WTC11 (cell line): ENCODE measurements at regions of chr10 and their contacts with region 1.

Region 1: GRCh38 chr10:48656241-48656913 is 28.3 kb upstream of the WDFY4 start:
- DNase-seq: peak; percentile 86
- ATAC-seq: peak; percentile 77
- H3K4me3 Mint-ChIP-seq: peak overlapping the region; percentile 66
- H3K27ac Mint-ChIP-seq: no peak overlapping the region
- H3K4me1 Mint-ChIP-seq: peaks cover 16% of the 10 kb centered on the region
- H3K27me3 Mint-ChIP-seq: peaks cover 30% of the 10 kb centered on the region
- CTCF ChIP-seq: peak; percentile 90

Region 2: DNA sequence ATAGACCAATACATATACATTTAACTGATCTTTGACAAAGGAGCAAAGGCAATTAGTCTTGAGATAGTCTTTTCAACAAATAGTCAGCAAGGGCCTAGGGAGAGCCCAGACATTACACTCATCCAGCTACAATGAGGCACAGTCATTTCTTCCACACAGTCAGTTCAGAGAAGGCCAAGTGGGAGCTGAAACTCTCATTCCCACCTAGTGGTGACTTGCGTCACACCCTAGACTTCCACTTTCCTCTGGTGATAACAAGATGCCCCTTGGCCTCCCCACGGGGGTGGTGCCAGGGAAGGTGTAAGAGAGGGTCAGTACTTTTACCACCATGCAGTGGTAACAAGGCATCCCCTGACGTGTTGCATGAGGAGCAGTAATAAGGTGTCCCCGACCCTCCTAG is 389.8 kb before region 1 on chr10:
- CTCF ChIA-PET with region 1: no interaction called
- POLR2A ChIA-PET with region 1: no interaction called
- DNase-seq: no peak
- ATAC-seq: no peak; the same call in 1 of the 2 replicates
- H3K4me3 Mint-ChIP-seq: no peak overlapping the region
- H3K27ac Mint-ChIP-seq: no peak overlapping the region
- H3K4me1 Mint-ChIP-seq: peaks cover 10% of the 10 kb centered on the region
- H3K27me3 Mint-ChIP-seq: peaks cover 2% of the 10 kb centered on the region; the same call in 1 of the 2 replicates
- CTCF ChIP-seq: no peak

Region 3: GRCh38 chr10:48384699-48384982 is 271.7 kb before region 1 on chr10:
- CTCF ChIA-PET with region 1: interaction called, 12 read pairs
- POLR2A ChIA-PET with region 1: no interaction called
- DNase-seq: no peak
- ATAC-seq: no peak
- H3K4me3 Mint-ChIP-seq: no peak overlapping the region
- H3K27ac Mint-ChIP-seq: peak overlapping the region; percentile 53; the same call in 1 of the 2 replicates
- H3K4me1 Mint-ChIP-seq: peaks cover 19% of the 10 kb centered on the region
- H3K27me3 Mint-ChIP-seq: no peaks in the 10 kb centered on the region; the same call in 1 of the 2 replicates
- CTCF ChIP-seq: no peak

Region 4: DNA sequence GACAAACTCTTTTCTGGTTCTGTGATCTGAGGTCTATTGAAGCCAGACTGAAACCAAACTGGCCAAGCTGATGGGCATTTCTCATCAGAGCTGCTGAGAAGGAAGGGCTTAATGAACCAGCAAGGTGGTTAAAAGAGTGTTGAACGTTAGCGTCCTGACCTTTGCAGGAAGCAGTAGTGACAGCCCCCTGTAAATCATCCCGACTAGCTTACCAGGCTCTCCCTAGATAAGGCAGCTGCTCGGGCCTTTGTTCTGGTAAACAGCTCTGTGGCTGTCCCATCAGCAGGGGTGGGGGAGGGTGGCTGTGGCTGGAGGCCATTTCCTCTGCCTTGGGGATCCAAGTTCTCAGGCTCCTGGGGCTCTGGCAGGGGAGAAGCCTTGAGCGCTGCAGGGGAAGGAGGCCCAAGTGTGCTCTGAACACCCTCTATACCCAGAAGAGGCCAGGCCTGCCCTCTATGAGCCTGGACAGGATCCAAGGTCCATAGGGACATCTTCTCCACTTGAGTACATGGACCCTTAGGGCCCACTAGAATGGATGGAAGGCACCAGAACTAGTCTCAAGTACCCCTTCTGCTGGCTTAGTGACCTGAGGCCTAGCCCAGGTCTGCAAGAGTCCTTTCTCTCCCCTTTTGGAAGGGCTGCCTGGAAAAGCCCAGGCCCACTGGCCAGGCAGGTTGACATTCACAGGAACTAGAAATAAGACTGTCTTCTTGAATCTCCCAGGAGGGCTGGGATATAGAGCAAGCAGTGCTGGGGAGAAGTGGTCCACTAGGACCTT is 186.1 kb before region 1 on chr10:
- CTCF ChIA-PET with region 1: interaction called, 11 read pairs
- POLR2A ChIA-PET with region 1: no interaction called
- DNase-seq: no peak
- ATAC-seq: peak; percentile 69
- H3K4me3 Mint-ChIP-seq: no peak overlapping the region
- H3K27ac Mint-ChIP-seq: peak overlapping the region; percentile 23; the same call in 1 of the 2 replicates
- H3K4me1 Mint-ChIP-seq: peaks cover 40% of the 10 kb centered on the region
- H3K27me3 Mint-ChIP-seq: peaks cover 15% of the 10 kb centered on the region
- CTCF ChIP-seq: no peak

Region 5: GRCh38 chr10:48487244-48487643 is 169.1 kb before region 1 on chr10:
- CTCF ChIA-PET with region 1: no interaction called
- POLR2A ChIA-PET with region 1: no interaction called
- DNase-seq: no peak
- ATAC-seq: no peak
- H3K4me3 Mint-ChIP-seq: no peak overlapping the region
- H3K27ac Mint-ChIP-seq: no peak overlapping the region
- H3K4me1 Mint-ChIP-seq: peaks cover 27% of the 10 kb centered on the region
- H3K27me3 Mint-ChIP-seq: no peaks in the 10 kb centered on the region
- CTCF ChIP-seq: no peak

Region 6: GRCh38 chr10:48541144-48541795 is 115.1 kb before region 1 on chr10:
- CTCF ChIA-PET with region 1: interaction called, 268 read pairs
- POLR2A ChIA-PET with region 1: no interaction called
- DNase-seq: no peak
- ATAC-seq: no peak
- H3K4me3 Mint-ChIP-seq: no peak overlapping the region
- H3K27ac Mint-ChIP-seq: no peak overlapping the region
- H3K4me1 Mint-ChIP-seq: peaks cover 60% of the 10 kb centered on the region
- H3K27me3 Mint-ChIP-seq: no peaks in the 10 kb centered on the region
- CTCF ChIP-seq: no peak

Region 7: DNA sequence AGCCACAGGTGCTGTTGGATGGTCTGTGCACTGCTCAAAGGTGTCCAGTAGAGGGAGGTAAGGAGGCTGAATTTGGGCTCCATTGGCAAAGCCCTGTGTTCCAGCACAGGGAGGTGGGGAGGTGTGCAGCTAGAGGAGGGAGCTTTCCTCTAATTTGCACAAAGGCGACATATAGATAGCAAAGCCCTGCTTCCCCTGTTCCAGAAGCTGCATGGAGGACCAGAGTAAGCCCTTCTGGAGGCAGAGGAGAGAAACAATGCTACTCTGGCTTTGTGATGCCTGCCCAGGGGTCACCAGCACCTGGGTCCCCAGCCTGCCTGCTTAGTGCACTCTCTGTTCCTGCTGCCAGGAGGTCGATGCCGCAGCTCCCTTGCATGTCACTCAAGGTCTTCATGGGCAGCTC is 48.1 kb before region 1 on chr10:
- CTCF ChIA-PET with region 1: interaction called, 102 read pairs
- POLR2A ChIA-PET with region 1: interaction called, 3 read pairs
- DNase-seq: peak; percentile 73
- ATAC-seq: peak; percentile 93
- H3K4me3 Mint-ChIP-seq: no peak overlapping the region
- H3K27ac Mint-ChIP-seq: no peak overlapping the region
- H3K4me1 Mint-ChIP-seq: peaks cover 25% of the 10 kb centered on the region
- H3K27me3 Mint-ChIP-seq: peaks cover 41% of the 10 kb centered on the region
- CTCF ChIP-seq: peak; percentile 76

Region 8: DNA sequence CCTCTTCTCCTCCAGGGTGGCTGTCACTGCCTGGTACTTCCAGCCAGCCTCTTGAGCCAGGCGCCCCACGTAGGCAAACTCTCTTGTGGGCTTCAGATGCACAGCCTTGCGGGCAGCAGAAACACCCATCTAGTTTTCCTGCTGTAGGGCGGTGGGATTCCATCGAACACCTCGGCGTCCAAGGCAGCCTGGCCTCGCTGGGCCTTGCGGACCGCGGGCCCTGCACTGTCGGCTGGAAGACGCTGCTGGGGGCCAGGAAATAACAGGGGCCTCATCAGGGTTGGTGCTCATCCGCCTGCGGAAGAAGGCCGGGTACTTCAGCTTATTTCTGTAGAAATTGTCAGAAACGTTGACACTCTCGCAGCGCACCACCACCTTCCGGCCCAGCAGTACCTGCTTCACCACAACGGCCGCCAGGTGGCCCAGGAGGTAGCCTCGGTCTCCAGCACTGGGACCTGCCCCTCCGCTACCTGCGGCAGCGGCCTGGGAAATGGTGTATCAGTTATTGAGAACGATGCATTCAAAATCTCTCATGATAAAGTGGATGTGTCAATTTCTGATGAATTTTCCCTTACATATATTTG is 89.4 kb after region 1 on chr10:
- CTCF ChIA-PET with region 1: interaction called, 10 read pairs
- POLR2A ChIA-PET with region 1: no interaction called
- DNase-seq: peak; percentile 83
- ATAC-seq: peak; percentile 98
- H3K4me3 Mint-ChIP-seq: no peak overlapping the region
- H3K27ac Mint-ChIP-seq: no peak overlapping the region
- H3K4me1 Mint-ChIP-seq: peaks cover 2% of the 10 kb centered on the region; the same call in 1 of the 2 replicates
- H3K27me3 Mint-ChIP-seq: no peaks in the 10 kb centered on the region
- CTCF ChIP-seq: peak; percentile 46